ENCODE measurements at regions of chr7 and their contacts with region 1.

Region 1: DNA sequence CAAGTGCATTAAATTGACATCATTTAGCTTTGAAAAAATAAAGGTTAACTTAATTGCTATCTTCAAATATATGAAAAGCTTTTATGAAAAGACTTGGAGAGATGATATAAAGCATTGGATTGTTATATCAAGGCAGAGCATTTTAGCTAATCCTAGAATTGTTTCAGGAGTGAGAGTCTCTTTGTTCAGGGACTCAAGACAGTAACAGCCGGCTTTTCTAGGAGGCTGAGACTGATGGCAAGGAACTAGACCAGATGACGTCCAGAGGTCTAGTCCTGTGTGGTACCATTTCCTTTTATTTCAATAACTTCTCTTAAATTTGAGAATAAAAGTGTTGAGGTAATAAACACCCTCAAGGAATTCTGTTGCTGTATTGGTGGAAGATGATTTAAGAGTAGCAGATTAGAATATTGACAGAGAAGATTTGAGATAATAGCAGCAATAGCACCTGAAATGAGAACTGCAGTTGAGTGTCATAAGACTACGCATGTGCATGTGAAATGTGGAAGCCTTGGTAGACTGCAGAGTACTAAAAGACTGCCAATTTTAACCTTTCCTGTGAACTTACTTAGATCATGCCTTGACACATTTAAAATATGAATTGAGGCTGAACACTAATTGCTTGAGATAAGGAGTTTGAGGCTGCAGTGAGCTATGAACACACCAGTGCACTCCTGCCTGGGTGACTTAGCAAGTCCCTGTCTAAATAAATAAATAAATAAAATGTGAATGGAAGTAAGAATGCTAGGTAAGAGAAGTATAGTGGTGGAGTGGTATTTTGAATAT is 79.6 kb downstream of the ZNRF2 start:
- H3K4me3 Mint-ChIP-seq: no peak overlapping the region
- H3K27ac Mint-ChIP-seq: no peak overlapping the region
- H3K4me1 Mint-ChIP-seq: peaks cover 12% of the 10 kb centered on the region
- H3K27me3 Mint-ChIP-seq: no peaks in the 10 kb centered on the region

Region 2: DNA sequence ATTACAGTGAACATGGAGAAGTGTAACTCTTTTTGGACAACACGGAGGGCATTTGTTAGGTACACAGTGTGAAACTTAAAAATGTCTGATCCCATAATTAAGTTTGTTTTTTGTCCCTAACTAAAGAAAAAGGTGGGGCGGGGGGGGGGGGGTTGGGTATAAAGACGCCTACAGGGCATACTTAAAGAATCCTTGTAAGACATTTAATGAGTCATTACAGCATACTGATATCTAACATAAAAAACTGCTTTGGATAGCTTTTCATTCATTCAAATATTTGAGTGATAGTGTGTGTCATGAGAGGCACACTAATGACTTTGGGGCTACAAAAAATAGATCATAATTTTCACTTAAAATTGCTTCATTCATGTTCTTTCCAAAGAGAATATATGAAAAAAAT is 48.4 kb before region 1 on chr7:
- intact Hi-C with region 1: loop called (anchors 5 kb)
- H3K4me3 Mint-ChIP-seq: no peak overlapping the region
- H3K27ac Mint-ChIP-seq: no peak overlapping the region
- H3K4me1 Mint-ChIP-seq: peaks cover 46% of the 10 kb centered on the region
- H3K27me3 Mint-ChIP-seq: no peaks in the 10 kb centered on the region

Region 3: GRCh38 chr7:30348083-30348560 is 15.8 kb before region 1 on chr7:
- intact Hi-C with region 1: no loop called
- H3K4me3 Mint-ChIP-seq: peak overlapping the region; percentile 32
- H3K27ac Mint-ChIP-seq: peak overlapping the region; percentile 79
- H3K4me1 Mint-ChIP-seq: peaks cover 33% of the 10 kb centered on the region
- H3K27me3 Mint-ChIP-seq: no peaks in the 10 kb centered on the region